ENCODE measurements at regions of chr11 and their contacts with region 1.

Region 1: GRCh38 chr11:68090706-68091105 is 30.5 kb downstream of the CHKA start:
- DNase-seq: no peak
- ATAC-seq: no peak
- H3K4me3 ChIP-seq: no peak overlapping the region
- H3K27ac ChIP-seq: no peak overlapping the region
- H3K4me1 ChIP-seq: no peaks in the 10 kb centered on the region
- H3K27me3 ChIP-seq: no peaks in the 10 kb centered on the region
- CTCF ChIP-seq: no peak
- POLR2A ChIP-seq: no peak
- RAD21 ChIP-seq: no peak

Region 2: GRCh38 chr11:67691149-67691548 is 399.6 kb before region 1 on chr11:
- CTCF ChIA-PET with region 1: no interaction called
- POLR2A ChIA-PET with region 1: no interaction called
- RAD21 ChIA-PET with region 1: no interaction called
- intact Hi-C with region 1: no loop called
- DNase-seq: no peak
- ATAC-seq: peak; percentile 47; the same call in 1 of the 2 replicates
- H3K4me3 ChIP-seq: no peak overlapping the region
- H3K27ac ChIP-seq: no peak overlapping the region
- H3K4me1 ChIP-seq: no peaks in the 10 kb centered on the region
- H3K27me3 ChIP-seq: no peaks in the 10 kb centered on the region
- CTCF ChIP-seq: peak; percentile 22 to 47 (median 28); a peak in 4 of 6 replicates
- POLR2A ChIP-seq: no peak
- RAD21 ChIP-seq: peak; percentile 48

Region 3: DNA sequence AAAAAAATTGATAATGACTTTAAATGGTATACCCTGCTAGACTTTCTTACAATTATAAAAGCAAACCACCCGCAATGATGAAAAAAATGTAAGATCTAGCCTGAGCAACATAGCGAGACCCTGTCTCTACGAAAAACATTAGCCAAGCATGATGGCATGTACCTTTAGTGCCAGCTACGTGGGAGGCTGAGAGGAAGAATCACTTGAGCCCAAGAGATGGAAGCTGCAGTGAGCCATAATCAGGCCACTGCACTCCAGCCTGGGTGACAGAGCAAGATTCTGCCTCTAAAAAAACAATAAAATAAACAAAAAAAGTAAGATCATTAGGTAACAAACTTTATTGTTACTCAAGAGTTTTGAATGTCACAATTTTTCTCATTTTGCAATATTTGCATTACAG is 83.2 kb after region 1 on chr11:
- CTCF ChIA-PET with region 1: no interaction called
- POLR2A ChIA-PET with region 1: no interaction called
- RAD21 ChIA-PET with region 1: no interaction called
- intact Hi-C with region 1: loop called (anchors 5 kb)
- DNase-seq: no peak
- ATAC-seq: no peak
- H3K4me3 ChIP-seq: no peak overlapping the region
- H3K27ac ChIP-seq: no peak overlapping the region
- H3K4me1 ChIP-seq: no peaks in the 10 kb centered on the region
- H3K27me3 ChIP-seq: no peaks in the 10 kb centered on the region
- CTCF ChIP-seq: no peak
- POLR2A ChIP-seq: no peak
- RAD21 ChIP-seq: no peak